ENCODE measurements at regions of chr1 and their contacts with region 1.

Region 1: GRCh38 chr1:160777486-160778089 is 18.4 kb upstream of the LY9 start:
- DNase-seq: peak; percentile 49
- H3K4me3 ChIP-seq: no peak overlapping the region
- H3K27ac ChIP-seq: no peak overlapping the region
- H3K4me1 ChIP-seq: peaks cover 14 to 20% (median 18%) of the 10 kb centered on the region in 4 donors
- H3K27me3 ChIP-seq: no peaks in the 10 kb centered on the region
- CTCF ChIP-seq: peak; percentile 50 to 75 (median 61)
- EP300 ChIP-seq: no peak
- POLR2A ChIP-seq: no peak

Region 2: GRCh38 chr1:160544647-160545046 is 232.9 kb before region 1 on chr1:
- in situ Hi-C with region 1: no loop called
- intact Hi-C with region 1: no loop called
- DNase-seq: no peak
- H3K4me3 ChIP-seq: no peak overlapping the region
- H3K27ac ChIP-seq: no peak overlapping the region
- H3K4me1 ChIP-seq: peaks cover 0 to 31% (median 17%) of the 10 kb centered on the region in 4 donors
- H3K27me3 ChIP-seq: no peaks in the 10 kb centered on the region
- CTCF ChIP-seq: peak; percentile 24 to 41 (median 33)
- EP300 ChIP-seq: no peak
- POLR2A ChIP-seq: no peak

Region 3: DNA sequence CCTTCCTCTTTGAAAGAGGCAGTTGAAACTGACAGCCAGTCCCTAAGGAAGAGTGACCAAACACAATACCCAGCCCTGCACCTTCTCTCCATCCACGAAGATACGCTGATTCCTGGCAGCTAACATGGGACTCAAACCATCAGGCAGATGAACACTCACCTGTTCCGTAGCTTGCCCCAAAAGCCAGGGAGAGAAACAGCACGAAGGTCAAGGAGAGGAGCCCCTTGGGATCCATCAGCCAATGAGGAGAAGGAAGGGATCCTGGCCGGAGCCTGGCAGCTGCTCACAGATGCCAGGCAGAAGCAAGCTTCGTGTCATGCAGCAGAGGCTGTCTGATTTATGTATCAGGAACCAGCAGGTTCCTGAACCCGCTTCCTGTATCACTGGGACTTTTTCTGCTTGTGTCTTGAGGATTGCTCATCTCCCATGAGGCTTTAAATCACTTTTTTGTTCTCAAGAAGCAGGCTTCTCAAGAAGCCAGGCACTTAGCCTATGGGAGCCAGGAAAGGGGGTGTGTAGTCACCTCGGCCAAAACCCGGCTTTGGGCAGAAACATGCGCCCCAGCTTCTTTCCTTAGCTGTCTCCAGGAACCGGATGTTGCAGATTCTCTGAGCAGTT is 130.8 kb before region 1 on chr1 and contains the start of gene SLAMF1:
- in situ Hi-C with region 1: no loop called
- intact Hi-C with region 1: no loop called
- DNase-seq: peak; percentile 30
- H3K4me3 ChIP-seq: peak within 1 kb of the TSS in 2 of 4 donors; percentile 5 to 34
- H3K27ac ChIP-seq: peak within 1 kb of the TSS; percentile 32 to 71 (median 51)
- H3K4me1 ChIP-seq: no peaks in the 10 kb centered on the region
- H3K27me3 ChIP-seq: no peaks in the 10 kb centered on the region
- CTCF ChIP-seq: no peak
- EP300 ChIP-seq: no peak
- POLR2A ChIP-seq: no peak
- total RNA-seq, gene SLAMF1: 1.1 to 3.3 (median 3.2) TPM in 3 of 4 donors, not detected in the other

Region 4: GRCh38 chr1:160726498-160727315 is 50.9 kb before region 1 on chr1:
- in situ Hi-C with region 1: loop called in 1 of 4 experiments (anchors 10 kb)
- intact Hi-C with region 1: no loop called
- DNase-seq: peak; percentile 67
- H3K4me3 ChIP-seq: no peak overlapping the region
- H3K27ac ChIP-seq: peak overlapping the region; percentile 64 to 75 (median 70)
- H3K4me1 ChIP-seq: peaks cover 2 to 16% (median 6%) of the 10 kb centered on the region in 4 donors
- H3K27me3 ChIP-seq: no peaks in the 10 kb centered on the region
- CTCF ChIP-seq: peak; percentile 68 to 93 (median 82)
- EP300 ChIP-seq: no peak
- POLR2A ChIP-seq: no peak